ENCODE measurements at regions of chr10 and their contacts with region 1.

Region 1: GRCh38 chr10:124719213-124719851 is 24.8 kb downstream of the FAM53B start:
- DNase-seq: peak; percentile 87
- H3K4me3 ChIP-seq: peak overlapping the region in 2 of 8 donors; percentile 12 to 59
- H3K27ac ChIP-seq: peak overlapping the region; percentile 75 to 95 (median 92)
- H3K4me1 ChIP-seq: peaks cover 91 to 100% (median 100%) of the 10 kb centered on the region in 6 donors
- H3K27me3 ChIP-seq: no peaks in the 10 kb centered on the region
- CTCF ChIP-seq: peak; percentile 47 to 84 (median 74)
- POLR2A ChIP-seq: no peak

Region 2: GRCh38 chr10:124497196-124497881 is 222.0 kb before region 1 on chr10:
- intact Hi-C with region 1: no loop called
- DNase-seq: no peak
- H3K4me3 ChIP-seq: no peak overlapping the region
- H3K27ac ChIP-seq: no peak overlapping the region
- H3K4me1 ChIP-seq: peaks cover 0 to 19% (median 9%) of the 10 kb centered on the region in 6 donors
- H3K27me3 ChIP-seq: no peaks in the 10 kb centered on the region
- CTCF ChIP-seq: no peak
- POLR2A ChIP-seq: no peak

Region 3: DNA sequence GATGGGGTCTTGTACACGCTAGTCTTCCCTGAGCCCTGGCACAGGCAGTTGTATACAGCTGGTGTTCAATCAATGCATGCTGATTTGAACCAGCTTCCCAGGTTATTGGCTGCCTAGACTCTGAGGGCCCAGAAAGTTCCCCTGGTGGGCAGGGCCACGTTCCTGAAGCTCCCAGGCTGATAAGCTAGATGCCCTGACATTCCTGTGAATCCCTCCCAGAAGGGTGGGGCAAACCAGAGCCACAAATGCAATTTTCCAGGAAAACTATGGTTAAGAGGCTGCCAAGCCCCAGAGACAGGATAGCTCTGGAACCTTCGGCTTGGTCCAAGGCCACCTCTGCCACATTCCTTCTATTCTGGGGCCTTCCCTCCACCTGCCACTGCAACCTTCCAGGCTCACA is 53.4 kb before region 1 on chr10:
- intact Hi-C with region 1: loop called (anchors 10 kb)
- DNase-seq: no peak
- H3K4me3 ChIP-seq: no peak overlapping the region
- H3K27ac ChIP-seq: peak overlapping the region in 3 of 8 donors; percentile 21 to 89 (median 71)
- H3K4me1 ChIP-seq: peaks cover 27 to 98% (median 59%) of the 10 kb centered on the region in 6 donors
- H3K27me3 ChIP-seq: no peaks in the 10 kb centered on the region
- CTCF ChIP-seq: no peak
- POLR2A ChIP-seq: no peak